ENCODE measurements at regions of chr11 and their contacts with region 1.

Region 1: GRCh38 chr11:102592634-102593581 is 32.2 kb downstream of the MMP20 start:
- DNase-seq: no peak
- ATAC-seq: no peak
- H3K4me3 Mint-ChIP-seq: no peak overlapping the region
- H3K27ac Mint-ChIP-seq: no peak overlapping the region
- H3K4me1 Mint-ChIP-seq: peaks cover 40% of the 10 kb centered on the region
- H3K27me3 Mint-ChIP-seq: no peaks in the 10 kb centered on the region
- CTCF ChIP-seq: no peak

Region 2: DNA sequence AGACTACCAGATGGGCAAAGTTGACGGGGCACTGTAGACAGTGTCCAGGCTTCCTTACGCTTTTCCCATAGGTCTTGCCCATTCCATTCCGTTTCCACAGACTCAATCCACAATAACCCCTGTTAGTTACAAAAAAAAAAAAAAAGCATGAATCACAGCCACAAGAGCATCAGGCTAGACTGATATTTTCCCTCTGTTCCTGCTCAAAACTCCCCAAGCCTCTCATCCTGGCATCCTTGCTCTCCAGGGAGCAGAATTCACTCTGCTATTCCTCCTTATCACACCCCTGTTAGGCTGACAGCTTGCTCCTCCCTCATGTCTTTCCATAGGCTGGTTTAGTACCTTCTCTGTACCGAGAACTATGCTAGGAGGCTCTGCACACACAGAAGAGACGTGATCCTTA is 182.5 kb before region 1 on chr11:
- CTCF ChIA-PET with region 1: no interaction called
- POLR2A ChIA-PET with region 1: no interaction called
- intact Hi-C with region 1: no loop called
- DNase-seq: no peak
- ATAC-seq: no peak
- H3K4me3 Mint-ChIP-seq: no peak overlapping the region
- H3K27ac Mint-ChIP-seq: no peak overlapping the region
- H3K4me1 Mint-ChIP-seq: peaks cover 50% of the 10 kb centered on the region
- H3K27me3 Mint-ChIP-seq: no peaks in the 10 kb centered on the region
- CTCF ChIP-seq: no peak

Region 3: GRCh38 chr11:102577182-102577581 is 15.7 kb before region 1 on chr11:
- CTCF ChIA-PET with region 1: no interaction called
- POLR2A ChIA-PET with region 1: no interaction called
- intact Hi-C with region 1: loop called (anchors 2 kb)
- DNase-seq: no peak
- ATAC-seq: no peak
- H3K4me3 Mint-ChIP-seq: no peak overlapping the region
- H3K27ac Mint-ChIP-seq: no peak overlapping the region
- H3K4me1 Mint-ChIP-seq: peaks cover 42% of the 10 kb centered on the region
- H3K27me3 Mint-ChIP-seq: no peaks in the 10 kb centered on the region
- CTCF ChIP-seq: no peak

Region 4: DNA sequence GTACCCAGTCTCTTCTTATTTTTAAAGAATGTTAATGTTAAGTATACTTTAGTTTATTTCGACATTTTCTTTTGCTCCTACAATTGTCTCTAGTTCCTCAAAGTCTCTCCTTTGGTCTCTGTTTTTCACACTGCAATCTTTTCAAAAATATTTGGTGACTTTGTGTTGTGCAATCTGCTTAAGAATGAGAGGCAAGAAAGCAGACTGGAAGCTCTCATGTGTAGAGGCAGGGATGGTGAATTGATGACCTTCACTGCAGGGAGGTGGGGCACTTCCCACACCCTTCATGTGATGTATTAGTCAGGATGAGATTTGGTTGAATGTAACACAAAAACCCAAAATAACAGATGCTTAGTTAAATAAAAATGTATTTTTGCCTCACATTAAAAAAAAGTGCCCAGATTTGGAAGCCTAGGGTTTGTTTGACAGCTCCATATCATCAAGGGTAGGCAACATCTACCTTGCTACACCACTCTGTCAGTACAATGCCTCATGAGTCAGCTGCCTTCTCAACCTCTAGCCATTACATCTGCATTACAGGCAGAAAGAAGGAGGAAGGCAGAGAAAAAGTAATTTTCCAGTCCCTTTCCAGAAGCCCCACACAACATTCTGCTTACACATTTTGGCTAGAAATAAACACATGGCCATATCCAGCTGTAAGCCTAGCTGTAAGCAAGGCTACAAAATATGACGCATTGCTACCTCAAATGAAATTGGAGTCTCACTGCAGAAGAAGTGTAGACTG is 116.5 kb after region 1 on chr11:
- CTCF ChIA-PET with region 1: no interaction called
- POLR2A ChIA-PET with region 1: no interaction called
- intact Hi-C with region 1: no loop called
- DNase-seq: no peak
- ATAC-seq: no peak
- H3K4me3 Mint-ChIP-seq: no peak overlapping the region
- H3K27ac Mint-ChIP-seq: no peak overlapping the region
- H3K4me1 Mint-ChIP-seq: no peaks in the 10 kb centered on the region
- H3K27me3 Mint-ChIP-seq: peaks cover 18% of the 10 kb centered on the region
- CTCF ChIP-seq: no peak